ENCODE measurements at regions of chr6 and their contacts with region 1.

Region 1: DNA sequence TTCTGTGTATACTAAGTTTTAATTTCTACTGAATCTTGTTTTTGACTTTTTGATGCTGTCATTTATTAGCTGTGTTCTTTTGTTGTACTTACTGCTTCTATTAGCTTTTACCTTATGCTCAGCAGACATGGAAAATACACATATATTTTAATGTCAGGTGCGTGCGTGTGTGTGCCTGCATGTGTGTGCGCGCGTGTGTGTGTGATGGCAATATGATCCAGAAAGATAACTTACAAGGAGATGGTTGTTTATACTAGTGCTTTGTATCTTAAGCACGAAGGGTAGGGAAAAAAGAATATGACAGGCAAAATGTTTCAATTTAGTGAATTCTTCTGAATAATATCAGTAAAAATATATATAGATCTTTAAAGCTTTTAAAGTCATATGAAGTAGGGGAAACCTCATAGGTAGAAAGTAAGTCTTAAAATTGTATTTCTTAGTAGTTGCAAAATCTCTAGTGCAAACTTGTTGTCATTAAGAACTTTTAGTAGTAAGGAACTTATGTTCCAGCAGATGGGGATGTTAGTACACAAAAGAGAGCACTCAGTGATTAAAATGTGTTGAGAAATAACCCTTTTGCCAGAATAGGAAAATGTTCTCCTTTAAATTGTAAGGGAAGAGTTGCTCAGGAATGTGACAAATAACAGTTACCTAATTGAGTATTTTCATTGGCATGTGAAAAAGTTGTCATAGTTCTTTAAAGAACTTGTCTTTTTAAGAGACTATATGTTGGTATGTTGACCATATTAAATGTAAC is 13.2 kb downstream of the QKI start:
- DNase-seq: peak; percentile 82
- H3K4me3 ChIP-seq: no peak overlapping the region
- H3K27ac ChIP-seq: no peak overlapping the region
- H3K4me1 ChIP-seq: peaks cover 42% of the 10 kb centered on the region
- H3K27me3 ChIP-seq: no peaks in the 10 kb centered on the region
- CTCF ChIP-seq: peak; percentile 64; the same call in 1 of the 2 replicates

Region 2: GRCh38 chr6:163554663-163555062 is 127.0 kb after region 1 on chr6:
- CTCF ChIA-PET with region 1: no interaction called
- POLR2A ChIA-PET with region 1: no interaction called
- intact Hi-C with region 1: loop called (anchors 2 kb)
- DNase-seq: peak; percentile 63
- H3K4me3 ChIP-seq: no peak overlapping the region
- H3K27ac ChIP-seq: no peak overlapping the region
- H3K4me1 ChIP-seq: no peaks in the 10 kb centered on the region
- H3K27me3 ChIP-seq: no peaks in the 10 kb centered on the region
- CTCF ChIP-seq: peak; percentile 84

Region 3: DNA sequence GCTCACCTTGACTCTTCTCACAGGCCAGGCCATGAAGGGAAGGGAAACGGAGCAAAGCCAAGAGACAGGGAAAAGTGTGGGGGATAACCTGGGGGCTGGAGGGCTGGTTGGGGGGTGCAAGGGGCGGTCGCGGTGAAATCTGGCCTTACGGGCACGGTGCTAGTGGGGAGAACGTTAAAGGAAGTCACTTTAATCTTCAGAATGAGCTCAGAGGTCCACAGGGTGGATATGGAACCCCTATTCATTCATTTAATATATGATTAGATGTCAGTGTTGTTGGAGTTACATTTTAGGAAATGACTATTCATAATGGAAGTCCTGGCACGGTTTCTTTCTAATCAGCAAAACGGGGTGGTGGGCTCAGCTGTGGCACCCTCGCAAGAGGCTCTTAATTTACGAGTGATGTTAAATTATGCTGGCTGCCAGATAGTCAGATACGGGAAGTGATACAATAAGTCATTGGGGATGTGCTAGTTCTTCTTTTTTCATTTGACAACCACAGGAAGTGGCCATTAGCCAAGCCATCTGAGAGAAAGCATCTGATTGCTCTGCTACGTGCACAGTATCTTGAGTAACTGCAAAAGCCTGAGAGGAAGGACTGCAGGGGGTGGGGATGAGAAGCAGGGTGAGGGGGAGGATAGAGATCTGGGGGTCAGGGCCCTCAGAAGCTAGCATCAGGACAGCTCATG is 239.8 kb after region 1 on chr6:
- CTCF ChIA-PET with region 1: no interaction called
- POLR2A ChIA-PET with region 1: no interaction called
- intact Hi-C with region 1: loop called (anchors 10 kb)
- DNase-seq: peak; percentile 97
- H3K4me3 ChIP-seq: peak overlapping the region; percentile 5
- H3K27ac ChIP-seq: peak overlapping the region; percentile 81
- H3K4me1 ChIP-seq: peaks cover 44% of the 10 kb centered on the region
- H3K27me3 ChIP-seq: no peaks in the 10 kb centered on the region
- CTCF ChIP-seq: no peak

Region 4: DNA sequence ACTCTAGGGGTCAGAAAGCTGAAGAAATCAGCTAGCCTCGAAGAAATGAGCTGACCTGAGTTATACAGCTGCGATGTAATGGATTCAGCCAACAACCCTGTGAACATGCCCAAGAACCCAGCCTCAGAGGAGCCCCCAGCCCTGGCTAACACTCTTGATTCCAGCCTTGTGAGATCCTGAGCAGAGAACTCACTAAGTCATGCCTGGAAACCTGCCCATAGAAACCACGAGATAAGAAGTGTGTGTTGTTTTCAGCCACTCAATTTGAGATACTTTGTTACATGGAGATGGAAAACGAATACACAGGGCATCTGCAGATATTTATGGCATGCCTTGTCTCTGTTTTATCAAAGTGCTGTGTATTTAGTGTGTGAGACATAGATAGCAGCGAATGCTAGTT is 252.1 kb after region 1 on chr6:
- CTCF ChIA-PET with region 1: no interaction called
- POLR2A ChIA-PET with region 1: no interaction called
- intact Hi-C with region 1: no loop called
- DNase-seq: no peak
- H3K4me3 ChIP-seq: no peak overlapping the region
- H3K27ac ChIP-seq: no peak overlapping the region
- H3K4me1 ChIP-seq: no peaks in the 10 kb centered on the region
- H3K27me3 ChIP-seq: no peaks in the 10 kb centered on the region
- CTCF ChIP-seq: no peak

Region 5: DNA sequence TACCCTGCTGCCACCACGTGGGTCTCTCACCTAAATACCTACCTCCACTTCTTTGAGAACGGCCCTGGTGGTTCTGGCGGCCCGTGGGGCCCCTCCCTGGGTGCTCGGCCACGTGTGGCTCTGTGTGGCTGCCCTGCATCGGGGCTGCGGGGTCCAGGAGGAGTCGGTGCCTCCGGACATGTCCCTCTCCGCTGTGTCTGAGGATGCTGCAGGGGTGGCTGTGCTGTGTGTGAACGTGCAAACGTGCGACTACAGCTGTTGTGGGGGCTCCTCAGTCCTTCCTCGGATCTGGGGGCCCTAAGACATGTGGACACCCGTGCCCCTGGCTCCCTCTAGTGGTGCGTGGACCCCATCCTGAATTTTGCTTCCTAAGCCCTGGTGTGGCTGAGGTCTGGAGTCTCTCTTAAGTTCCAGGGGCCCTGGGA is 678.7 kb after region 1 on chr6:
- CTCF ChIA-PET with region 1: no interaction called
- POLR2A ChIA-PET with region 1: no interaction called
- intact Hi-C with region 1: loop called (anchors 5 kb)
- DNase-seq: peak; percentile 52
- H3K4me3 ChIP-seq: no peak overlapping the region
- H3K27ac ChIP-seq: no peak overlapping the region
- H3K4me1 ChIP-seq: peaks cover 15% of the 10 kb centered on the region
- H3K27me3 ChIP-seq: no peaks in the 10 kb centered on the region
- CTCF ChIP-seq: peak; percentile 71

Region 6: DNA sequence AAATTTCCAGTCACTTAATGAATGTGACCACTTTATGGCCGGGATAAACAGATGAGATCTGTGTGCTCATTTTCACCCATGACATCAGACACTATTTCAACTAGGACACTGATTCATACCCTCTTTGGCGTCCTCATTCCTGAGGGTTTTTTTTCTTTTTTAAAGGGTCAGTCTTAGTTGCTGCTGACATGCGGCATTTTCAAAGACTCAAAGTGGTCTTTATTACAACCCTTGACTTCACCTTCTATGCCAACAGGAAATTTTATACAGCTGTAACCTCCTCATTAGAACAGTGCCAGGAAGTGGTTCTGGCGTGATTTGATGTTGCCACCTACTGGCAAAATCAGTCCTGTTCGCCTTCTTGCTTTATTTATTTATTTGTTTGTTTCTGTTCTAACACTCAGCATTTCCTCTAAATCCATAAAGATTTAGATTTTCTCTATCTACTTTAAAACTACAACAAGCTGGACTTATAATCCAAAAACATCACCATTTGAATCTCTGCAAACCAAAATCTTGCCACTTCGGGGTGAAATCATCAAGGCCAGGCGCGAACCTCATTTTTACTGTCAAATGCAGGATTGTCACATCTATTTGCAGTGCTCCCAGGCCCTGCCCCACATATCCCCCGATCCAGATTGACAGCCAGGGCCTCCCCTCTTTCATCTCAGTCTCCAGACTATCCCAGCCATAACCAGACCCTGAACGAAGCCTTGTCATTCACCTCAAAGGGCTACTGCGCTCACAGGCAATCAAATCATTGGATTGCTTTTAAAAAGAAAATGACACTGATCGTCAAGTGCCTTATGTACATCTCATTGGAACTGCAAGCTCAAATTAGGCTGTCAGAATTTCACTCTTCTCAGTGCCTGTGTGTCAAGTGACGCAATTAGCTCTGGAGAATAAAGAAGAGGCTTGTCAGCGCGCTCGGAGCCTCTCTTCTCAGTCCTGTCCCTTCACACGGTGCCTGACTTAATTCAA is 1804.2 kb after region 1 on chr6:
- CTCF ChIA-PET with region 1: no interaction called
- POLR2A ChIA-PET with region 1: no interaction called
- intact Hi-C with region 1: loop called (anchors 10 kb)
- DNase-seq: peak; percentile 53
- H3K4me3 ChIP-seq: no peak overlapping the region
- H3K27ac ChIP-seq: no peak overlapping the region
- H3K4me1 ChIP-seq: no peaks in the 10 kb centered on the region
- H3K27me3 ChIP-seq: no peaks in the 10 kb centered on the region
- CTCF ChIP-seq: peak; percentile 70

Measured in A673 (cell line).